Prostate gland (tissue), 2 donors: ENCODE measurements at regions of chr17 and their contacts with region 1.

Region 1: DNA sequence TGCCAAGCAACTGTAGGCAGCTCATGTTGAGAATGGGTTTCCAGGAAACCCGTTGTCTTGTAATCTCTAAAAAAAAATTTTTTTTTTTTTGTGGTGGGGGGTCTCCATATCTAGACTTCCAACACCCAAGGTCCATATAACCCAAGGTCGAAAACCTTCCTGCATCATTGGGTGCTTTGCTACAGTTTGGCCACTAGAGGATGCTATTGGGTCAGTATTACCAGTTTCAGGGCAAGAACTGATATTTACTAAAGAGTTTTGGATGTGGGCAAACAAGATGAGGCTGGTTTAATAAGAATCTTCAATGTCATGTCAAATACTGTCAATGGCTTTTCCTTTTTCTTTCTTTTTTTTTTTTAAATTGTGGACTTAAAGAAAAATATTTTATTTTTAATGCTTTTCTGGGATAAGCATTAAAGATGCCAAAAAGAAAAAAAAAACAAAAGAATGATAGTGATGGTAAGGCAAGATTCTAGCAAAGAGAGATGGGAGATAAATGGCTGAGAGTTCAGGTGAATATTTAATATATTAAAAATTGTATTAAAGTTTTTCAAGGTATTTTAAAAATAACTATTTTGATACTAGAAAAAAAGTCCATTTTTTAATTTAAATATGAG is 62.2 kb downstream of the DHRS7C start:
- DNase-seq: peak; percentile 21
- H3K4me3 ChIP-seq: no peak overlapping the region
- H3K27ac ChIP-seq: no peak overlapping the region
- H3K4me1 ChIP-seq: no peaks in the 10 kb centered on the region
- H3K27me3 ChIP-seq: no peaks in the 10 kb centered on the region
- CTCF ChIP-seq: peak; percentile 81 to 93 (median 90)
- POLR2A ChIP-seq: no peak

Region 2: GRCh38 chr17:9905902-9906301 is 176.8 kb after region 1 on chr17:
- intact Hi-C with region 1: loop called (anchors 10 kb)
- DNase-seq: no peak
- H3K4me3 ChIP-seq: no peak overlapping the region
- H3K27ac ChIP-seq: no peak overlapping the region
- H3K4me1 ChIP-seq: no peaks in the 10 kb centered on the region
- H3K27me3 ChIP-seq: no peaks in the 10 kb centered on the region
- CTCF ChIP-seq: peak in 1 of 4 experiments; percentile 29
- POLR2A ChIP-seq: no peak

Region 3: DNA sequence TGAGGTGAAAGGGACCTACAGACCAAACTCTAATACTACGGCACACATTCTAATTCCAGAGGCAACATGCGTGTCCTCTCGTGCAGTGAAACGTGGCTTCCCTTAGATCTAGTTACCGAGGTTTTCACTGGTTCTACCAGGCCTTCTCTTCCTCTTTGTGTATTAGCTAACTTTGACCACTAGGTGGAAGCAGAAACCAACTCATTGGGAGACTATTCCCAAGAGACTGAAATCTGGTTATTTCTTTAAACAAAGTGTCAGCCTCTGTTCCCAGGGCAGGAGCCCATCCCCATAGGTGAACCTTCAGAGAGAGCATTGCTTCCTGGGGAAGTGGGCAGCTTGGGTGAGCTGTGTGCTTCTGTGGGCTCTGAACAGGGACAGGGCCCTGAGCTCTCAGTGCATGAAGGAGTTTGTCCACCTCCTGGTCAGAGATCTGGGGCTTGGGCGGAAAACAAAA is 195.6 kb after region 1 on chr17:
- intact Hi-C with region 1: loop called (anchors 5 kb)
- DNase-seq: peak; percentile 42
- H3K4me3 ChIP-seq: no peak overlapping the region
- H3K27ac ChIP-seq: no peak overlapping the region
- H3K4me1 ChIP-seq: no peaks in the 10 kb centered on the region
- H3K27me3 ChIP-seq: no peaks in the 10 kb centered on the region
- CTCF ChIP-seq: peak; percentile 60 to 86 (median 79)
- POLR2A ChIP-seq: no peak